PC-9 (cell line): ENCODE measurements at regions of chr18 and their contacts with region 1.

Region 1: DNA sequence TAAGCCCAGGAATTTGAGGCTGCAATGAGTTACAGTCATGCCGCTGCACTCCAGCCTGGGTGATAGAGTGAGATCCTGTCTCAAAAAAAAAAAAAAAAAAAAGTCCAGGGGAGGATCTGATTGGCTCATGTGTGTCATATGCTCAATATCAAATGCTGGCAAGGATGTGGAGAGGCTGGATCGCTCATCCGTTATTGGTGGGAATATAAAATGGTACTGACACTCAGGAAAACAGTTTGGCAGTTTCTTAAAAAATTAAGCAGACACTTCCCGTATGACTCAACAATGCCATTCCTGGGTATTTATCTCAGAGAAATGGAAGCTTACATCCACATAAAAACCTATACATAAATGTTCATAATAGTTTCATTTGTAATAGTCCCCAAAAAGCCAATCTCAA is 68.9 kb downstream of the MEX3C start:
- DNase-seq: no peak
- H3K4me3 ChIP-seq: no peak overlapping the region
- H3K27ac ChIP-seq: no peak overlapping the region
- H3K4me1 ChIP-seq: no peaks in the 10 kb centered on the region
- H3K27me3 ChIP-seq: no peaks in the 10 kb centered on the region
- CTCF ChIP-seq: no peak

Region 2: DNA sequence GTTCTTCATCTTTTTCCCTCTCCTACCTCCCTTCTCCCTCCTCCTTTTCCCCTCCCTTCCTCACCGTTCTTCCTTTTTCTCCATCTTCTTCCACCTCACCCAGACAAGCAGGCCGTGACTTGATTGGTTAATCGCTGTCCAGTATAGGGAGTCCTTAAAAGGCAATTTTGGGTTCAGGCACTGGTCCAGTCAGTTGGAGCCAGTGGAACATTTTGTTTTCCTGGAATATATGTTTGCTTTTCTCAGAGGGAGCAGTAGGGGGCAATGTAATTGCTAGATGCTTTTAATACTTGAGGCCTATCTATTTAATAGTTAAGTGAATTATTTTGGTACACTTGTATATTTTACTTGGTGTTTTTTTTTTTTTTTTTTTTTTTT is 145.7 kb before region 1 on chr18:
- CTCF ChIA-PET with region 1: no interaction called
- POLR2A ChIA-PET with region 1: no interaction called
- intact Hi-C with region 1: no loop called
- DNase-seq: no peak
- H3K4me3 ChIP-seq: no peak overlapping the region
- H3K27ac ChIP-seq: no peak overlapping the region
- H3K4me1 ChIP-seq: peaks cover 15% of the 10 kb centered on the region; the same call in 1 of the 2 replicates
- H3K27me3 ChIP-seq: no peaks in the 10 kb centered on the region
- CTCF ChIP-seq: no peak

Region 3: GRCh38 chr18:51150132-51150715 is 21.7 kb after region 1 on chr18:
- CTCF ChIA-PET with region 1: no interaction called
- POLR2A ChIA-PET with region 1: interaction called, 15 read pairs
- intact Hi-C with region 1: no loop called
- DNase-seq: peak in 1 of 2 experiments; percentile 61
- H3K4me3 ChIP-seq: no peak overlapping the region
- H3K27ac ChIP-seq: no peak overlapping the region
- H3K4me1 ChIP-seq: peaks cover 16% of the 10 kb centered on the region
- H3K27me3 ChIP-seq: no peaks in the 10 kb centered on the region
- CTCF ChIP-seq: no peak

Region 4: GRCh38 chr18:51275712-51276476 is 147.4 kb after region 1 on chr18:
- CTCF ChIA-PET with region 1: no interaction called
- POLR2A ChIA-PET with region 1: no interaction called
- intact Hi-C with region 1: no loop called
- DNase-seq: no peak
- H3K4me3 ChIP-seq: no peak overlapping the region
- H3K27ac ChIP-seq: no peak overlapping the region
- H3K4me1 ChIP-seq: no peaks in the 10 kb centered on the region
- H3K27me3 ChIP-seq: no peaks in the 10 kb centered on the region
- CTCF ChIP-seq: no peak